ENCODE measurements at regions of chr19 and their contacts with region 1.

Region 1: DNA sequence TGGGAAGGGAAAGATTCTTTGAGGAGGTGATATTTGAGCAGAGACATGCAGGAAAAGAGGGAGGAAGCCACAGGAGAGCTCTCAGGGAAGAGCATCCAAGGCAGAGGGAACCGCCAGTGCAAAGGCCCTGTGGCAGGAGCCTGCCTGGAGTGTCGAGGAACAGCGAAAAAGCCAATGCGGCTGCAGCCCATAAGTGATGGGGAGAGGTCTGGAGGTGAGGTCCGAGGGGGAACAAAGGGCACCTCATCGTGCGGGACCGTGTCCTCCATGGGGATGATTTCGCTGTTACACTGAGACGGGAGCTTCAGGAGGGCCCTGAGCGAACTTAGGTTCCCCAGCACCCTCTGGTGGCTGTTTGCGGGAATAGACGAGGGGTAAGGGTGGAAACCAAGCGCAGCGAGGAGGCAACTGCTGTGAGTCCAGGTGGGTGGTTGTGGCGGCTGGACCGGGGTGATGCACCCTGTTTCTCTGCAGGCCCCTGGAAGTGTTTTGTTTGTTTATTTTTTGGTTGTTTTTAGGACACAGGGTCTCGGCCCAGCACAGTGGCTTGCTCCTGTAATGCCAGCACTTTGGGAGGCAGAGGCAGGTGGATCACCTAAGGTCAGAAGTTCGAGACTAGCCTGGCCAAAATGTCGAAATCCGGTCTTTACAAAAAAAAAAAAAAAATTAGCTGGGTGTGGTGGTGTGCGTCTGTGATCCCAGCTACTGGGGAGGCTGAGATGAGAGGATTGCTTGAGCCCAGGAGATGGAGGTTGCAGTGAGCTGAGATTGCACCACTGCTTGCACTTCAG is 5.9 kb upstream of the EHD2 start:
- H3K4me3 ChIP-seq: no peak overlapping the region
- H3K27ac ChIP-seq: no peak overlapping the region
- H3K4me1 ChIP-seq: no peaks in the 10 kb centered on the region
- CTCF ChIP-seq: peak; percentile 84

Region 2: GRCh38 chr19:47324502-47324901 is 382.8 kb before region 1 on chr19:
- CTCF ChIA-PET with region 1: no interaction called
- POLR2A ChIA-PET with region 1: no interaction called
- H3K4me3 ChIP-seq: no peak overlapping the region
- H3K27ac ChIP-seq: no peak overlapping the region
- H3K4me1 ChIP-seq: no peaks in the 10 kb centered on the region
- CTCF ChIP-seq: no peak

Region 3: GRCh38 chr19:47719047-47719859 is 11.9 kb after region 1 on chr19:
- CTCF ChIA-PET with region 1: interaction called, 19 read pairs
- POLR2A ChIA-PET with region 1: interaction called, 4 read pairs
- H3K4me3 ChIP-seq: no peak overlapping the region
- H3K27ac ChIP-seq: peak overlapping the region; percentile 66; the same call in 1 of the 2 replicates
- H3K4me1 ChIP-seq: peaks cover 9% of the 10 kb centered on the region
- CTCF ChIP-seq: no peak

Region 4: GRCh38 chr19:47725759-47726401 is 18.6 kb after region 1 on chr19:
- CTCF ChIA-PET with region 1: interaction called, 18 read pairs
- POLR2A ChIA-PET with region 1: interaction called, 7 read pairs
- H3K4me3 ChIP-seq: no peak overlapping the region
- H3K27ac ChIP-seq: no peak overlapping the region
- H3K4me1 ChIP-seq: peaks cover 6% of the 10 kb centered on the region
- CTCF ChIP-seq: no peak

Measured in HEK293 (cell line).